ENCODE measurements at regions of chr10 and their contacts with region 1.

Region 1: GRCh38 chr10:21278491-21279239 is 246.8 kb downstream of the SKIDA1 start:
- DNase-seq: peak; percentile 65
- CTCF ChIP-seq: peak; percentile 84

Region 2: GRCh38 chr10:21495752-21496342 is 217.2 kb after region 1 on chr10:
- in situ Hi-C with region 1: loop called (anchors 25 kb)
- DNase-seq: peak; percentile 96
- CTCF ChIP-seq: peak; percentile 99

Region 3: GRCh38 chr10:21724695-21725367 is 446.2 kb after region 1 on chr10:
- in situ Hi-C with region 1: loop called (anchors 25 kb)
- DNase-seq: peak; percentile 43
- CTCF ChIP-seq: no peak

Region 4: GRCh38 chr10:21926949-21927348 is 648.3 kb after region 1 on chr10:
- in situ Hi-C with region 1: loop called (anchors 25 kb)
- DNase-seq: no peak
- CTCF ChIP-seq: no peak